AG04449 (cell line): ENCODE measurements at regions of chr17 and their contacts with region 1.

Region 1: GRCh38 chr17:16380640-16381495 is at the start of gene UBB:
- DNase-seq: peak; percentile 95
- H3K4me3 ChIP-seq: peak within 1 kb of the TSS; percentile 86
- CTCF ChIP-seq: peak; percentile 8

Region 2: GRCh38 chr17:16353317-16354174 is 27.3 kb before region 1 on chr17 and contains the start of gene CENPV:
- CTCF ChIA-PET with region 1: interaction called, 6 read pairs
- POLR2A ChIA-PET with region 1: interaction called, 13 read pairs
- DNase-seq: no peak
- H3K4me3 ChIP-seq: peak within 1 kb of the TSS; percentile 67
- CTCF ChIP-seq: no peak

Region 3: DNA sequence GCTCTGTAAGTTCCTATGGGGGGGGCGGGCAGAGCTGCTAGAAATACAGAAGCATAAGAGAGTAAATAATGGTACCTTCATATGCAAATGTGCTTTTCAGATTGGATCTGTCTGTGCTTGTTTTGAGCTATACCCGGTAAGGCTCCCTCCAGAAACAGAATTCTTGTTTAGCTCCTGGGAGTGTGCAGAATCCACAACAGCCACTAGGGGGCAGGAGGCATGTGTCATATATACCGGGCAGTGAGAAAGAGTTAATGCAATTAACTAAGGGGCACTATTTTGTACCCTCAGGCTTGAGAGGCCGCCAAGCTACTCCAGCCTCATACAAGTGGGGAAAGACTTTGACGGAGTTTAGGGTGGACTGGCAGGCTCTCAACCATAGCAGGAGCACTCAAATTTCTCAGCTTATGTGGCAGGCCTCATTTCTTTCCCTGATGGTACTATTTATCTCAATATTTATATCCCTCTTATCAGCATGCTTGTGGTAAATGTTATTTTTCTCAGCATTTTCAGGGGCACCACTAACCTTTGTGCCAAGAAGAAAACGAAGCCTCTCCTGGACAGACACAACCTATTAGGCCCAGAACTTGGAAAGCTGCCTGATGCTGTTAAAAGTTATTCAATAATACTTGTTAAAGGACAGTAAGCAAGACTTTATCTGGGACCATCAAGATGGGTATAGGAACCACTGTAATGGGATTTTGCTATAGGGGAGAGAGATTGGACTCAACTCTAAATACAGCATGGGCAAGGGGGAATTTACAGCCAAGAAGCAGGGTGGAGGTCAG is 16.9 kb before region 1 on chr17:
- CTCF ChIA-PET with region 1: interaction called, 134 read pairs
- POLR2A ChIA-PET with region 1: interaction called, 13 read pairs
- DNase-seq: no peak
- H3K4me3 ChIP-seq: no peak overlapping the region
- CTCF ChIP-seq: peak; percentile 79

Region 4: DNA sequence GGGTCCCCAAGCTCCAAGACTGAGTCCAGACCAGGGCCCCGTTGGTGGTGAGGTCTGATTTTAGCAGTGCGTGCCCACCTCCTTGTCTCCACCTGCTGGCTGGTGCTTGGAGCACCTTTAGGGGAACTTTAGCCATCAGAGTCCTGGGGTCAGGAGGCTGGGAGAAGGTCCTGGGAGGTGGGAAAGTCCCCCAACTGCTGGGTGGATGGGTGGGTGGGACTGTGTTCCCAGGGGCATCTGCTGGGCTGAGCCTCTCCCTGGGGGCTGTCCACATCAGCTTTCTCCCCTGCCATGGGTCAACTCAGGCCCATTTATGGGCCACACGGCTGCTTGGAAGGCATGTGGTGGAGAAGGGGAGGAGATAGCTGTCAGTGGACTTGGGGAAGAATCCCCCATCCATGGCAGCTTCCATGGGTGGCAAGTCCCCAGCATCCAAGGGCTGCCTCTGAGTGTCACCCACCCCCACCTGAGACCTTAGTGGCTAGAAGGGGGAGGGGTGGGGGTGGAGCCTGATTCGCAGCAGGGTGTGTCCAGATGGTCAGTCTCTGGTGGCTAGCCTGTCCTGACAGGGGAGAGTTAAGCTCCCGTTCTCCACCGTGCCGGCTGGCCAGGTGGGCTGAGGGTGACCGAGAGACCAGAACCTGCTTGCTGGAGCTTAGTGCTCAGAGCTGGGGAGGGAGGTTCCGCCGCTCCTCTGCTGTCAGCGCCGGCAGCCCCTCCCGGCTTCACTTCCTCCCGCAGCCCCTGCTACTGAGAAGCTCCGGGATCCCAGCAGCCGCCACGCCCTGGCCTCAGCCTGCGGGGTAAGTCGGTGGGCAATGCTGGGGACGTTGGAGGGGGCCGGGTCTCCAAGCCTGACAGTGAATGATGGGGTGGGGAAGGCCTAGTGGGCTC is 34.4 kb after region 1 on chr17 and contains the start of gene TRPV2:
- CTCF ChIA-PET with region 1: no interaction called
- POLR2A ChIA-PET with region 1: interaction called, 27 read pairs
- DNase-seq: no peak
- H3K4me3 ChIP-seq: peak within 1 kb of the TSS; percentile 64
- CTCF ChIP-seq: peak; percentile 22

Region 5: DNA sequence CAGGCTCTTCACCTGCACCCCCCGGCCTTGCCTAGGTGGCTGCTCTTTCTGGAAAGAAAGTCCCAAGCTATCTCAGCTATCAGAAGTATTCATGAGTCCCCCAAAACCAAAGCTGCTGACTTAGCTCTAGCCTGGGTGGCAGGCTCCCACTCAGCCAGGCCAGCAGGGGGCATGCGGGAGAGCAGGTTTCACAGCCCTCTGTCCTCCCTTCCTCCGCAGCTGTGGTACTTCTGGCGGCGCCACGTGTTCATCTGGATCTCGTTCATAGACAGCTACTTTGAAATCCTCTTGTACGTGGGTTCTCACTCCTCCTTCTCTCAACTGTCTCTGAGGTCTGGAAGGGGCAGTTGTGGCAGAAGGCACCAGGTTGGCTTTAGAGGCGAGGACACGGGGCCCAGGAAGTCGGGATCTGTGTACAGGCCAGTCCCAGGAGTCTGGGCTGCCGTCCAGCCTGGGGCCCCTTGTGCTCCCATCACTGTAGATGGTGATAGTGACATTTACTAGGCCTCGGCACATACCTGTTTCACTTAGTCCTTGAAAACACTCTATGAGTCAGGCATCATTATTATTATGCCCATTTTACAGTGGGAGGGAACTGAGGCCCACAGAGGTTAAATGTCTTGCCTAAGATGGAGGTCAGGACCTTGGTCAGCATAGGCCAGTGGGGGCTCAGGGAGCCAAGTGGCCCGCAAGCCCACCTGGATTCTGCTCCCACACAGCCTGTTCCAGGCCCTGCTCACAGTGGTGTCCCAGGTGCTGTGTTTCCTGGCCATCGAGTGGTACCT is 47.4 kb after region 1 on chr17:
- CTCF ChIA-PET with region 1: no interaction called
- POLR2A ChIA-PET with region 1: interaction called, 10 read pairs
- DNase-seq: no peak
- H3K4me3 ChIP-seq: no peak overlapping the region
- CTCF ChIP-seq: peak; percentile 87

Region 6: GRCh38 chr17:16438557-16439302 is 57.9 kb after region 1 on chr17:
- CTCF ChIA-PET with region 1: interaction called, 3 read pairs
- POLR2A ChIA-PET with region 1: interaction called, 58 read pairs
- DNase-seq: peak; percentile 99
- H3K4me3 ChIP-seq: peak overlapping the region; percentile 96
- CTCF ChIP-seq: no peak

Region 7: GRCh38 chr17:16444258-16444886 is 63.5 kb after region 1 on chr17:
- CTCF ChIA-PET with region 1: interaction called, 3 read pairs
- POLR2A ChIA-PET with region 1: interaction called, 58 read pairs
- DNase-seq: no peak
- H3K4me3 ChIP-seq: no peak overlapping the region
- CTCF ChIP-seq: no peak